H1 (cell line): ENCODE measurements at regions of chr10 and their contacts with region 1.

Region 1: GRCh38 chr10:100562008-100562711 is 26.4 kb downstream of the HIF1AN start:
- DNase-seq: peak; percentile 36 to 81
- H3K4me3 ChIP-seq: no peak overlapping the region
- H3K27ac ChIP-seq: no peak overlapping the region
- H3K4me1 ChIP-seq: peaks cover 0 to 4% (median 0%) of the 10 kb centered on the region in 4 experiments; a peak in 2 of 7 replicates
- H3K27me3 ChIP-seq: peaks cover 0 to 16% (median 9%) of the 10 kb centered on the region in 4 experiments; a peak in 5 of 7 replicates
- CTCF ChIP-seq: peak; percentile 98 to 100 (median 99)
- EP300 ChIP-seq: no peak
- POLR2A ChIP-seq: no peak; a peak in 1 of 3 replicates
- RAD21 ChIP-seq: peak; percentile 96 to 97

Region 2: DNA sequence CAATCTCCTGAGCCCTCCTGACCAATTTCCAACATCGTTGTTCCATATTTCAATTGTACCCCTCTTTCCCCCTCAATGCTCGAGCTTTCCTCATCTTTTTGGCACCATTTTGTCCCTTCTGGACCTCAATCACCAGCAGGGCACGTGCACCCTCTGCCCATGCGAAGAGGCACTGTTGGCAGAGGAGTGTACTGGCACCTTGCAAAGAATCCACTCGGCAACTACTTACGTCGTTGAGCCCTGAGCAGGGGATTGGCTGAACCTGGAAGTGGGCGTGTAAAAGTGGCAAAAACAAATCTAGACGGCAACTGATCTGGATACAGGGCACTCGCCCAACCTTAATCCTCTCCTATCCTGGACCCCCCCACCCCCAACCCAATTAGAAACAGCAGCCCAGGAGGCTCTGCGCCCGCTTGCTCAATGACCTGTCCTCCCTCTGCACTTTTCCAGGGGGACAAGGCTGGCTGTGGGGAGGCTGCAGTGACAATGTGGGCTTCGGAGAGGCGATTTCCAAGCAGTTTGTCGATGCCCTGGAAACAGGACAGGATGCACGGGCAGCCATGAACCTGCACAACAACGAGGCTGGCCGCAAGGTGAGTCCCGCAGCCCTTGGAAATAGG is 80.6 kb before region 1 on chr10:
- CTCF ChIA-PET with region 1: no interaction called
- POLR2A ChIA-PET with region 1: no interaction called
- DNase-seq: peak; percentile 77 to 97
- H3K4me3 ChIP-seq: peak overlapping the region; percentile 35 to 59 (median 53)
- H3K27ac ChIP-seq: no peak overlapping the region
- H3K4me1 ChIP-seq: peaks cover 11 to 26% (median 19%) of the 10 kb centered on the region in 4 experiments
- H3K27me3 ChIP-seq: peaks cover 59 to 77% (median 70%) of the 10 kb centered on the region in 4 experiments
- CTCF ChIP-seq: peak in 2 of 3 experiments; percentile 4 to 7; a peak in 1 of 4 replicates
- EP300 ChIP-seq: no peak
- POLR2A ChIP-seq: no peak
- RAD21 ChIP-seq: 0 out of 4 replicates have a peak, but pooled peaks of 1 of the 2 experiments have one; percentile 4

Region 3: DNA sequence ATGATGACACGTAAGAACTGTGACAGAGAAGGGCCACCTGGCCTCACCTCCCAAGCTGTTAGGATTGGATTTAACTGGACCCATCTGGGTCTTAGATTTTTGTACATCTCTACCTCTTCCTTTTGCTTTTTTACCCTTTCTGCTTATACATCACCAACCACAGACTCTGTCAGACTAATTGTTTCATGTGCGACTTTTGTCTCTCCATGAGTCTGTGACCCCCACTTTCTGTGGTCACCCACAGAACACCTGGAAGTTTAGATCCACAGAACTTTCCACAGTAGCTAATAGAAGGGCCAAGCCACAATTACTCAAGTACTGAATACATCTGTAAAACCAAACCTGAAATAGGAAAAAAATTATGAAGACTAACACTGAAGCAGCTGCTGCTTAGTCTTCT is 65.6 kb before region 1 on chr10:
- CTCF ChIA-PET with region 1: no interaction called
- POLR2A ChIA-PET with region 1: no interaction called
- DNase-seq: no peak
- H3K4me3 ChIP-seq: no peak overlapping the region
- H3K27ac ChIP-seq: no peak overlapping the region
- H3K4me1 ChIP-seq: no peaks in the 10 kb centered on the region
- H3K27me3 ChIP-seq: peaks cover 7 to 50% (median 21%) of the 10 kb centered on the region in 4 experiments
- CTCF ChIP-seq: no peak
- EP300 ChIP-seq: no peak
- POLR2A ChIP-seq: no peak
- RAD21 ChIP-seq: no peak

Region 4: DNA sequence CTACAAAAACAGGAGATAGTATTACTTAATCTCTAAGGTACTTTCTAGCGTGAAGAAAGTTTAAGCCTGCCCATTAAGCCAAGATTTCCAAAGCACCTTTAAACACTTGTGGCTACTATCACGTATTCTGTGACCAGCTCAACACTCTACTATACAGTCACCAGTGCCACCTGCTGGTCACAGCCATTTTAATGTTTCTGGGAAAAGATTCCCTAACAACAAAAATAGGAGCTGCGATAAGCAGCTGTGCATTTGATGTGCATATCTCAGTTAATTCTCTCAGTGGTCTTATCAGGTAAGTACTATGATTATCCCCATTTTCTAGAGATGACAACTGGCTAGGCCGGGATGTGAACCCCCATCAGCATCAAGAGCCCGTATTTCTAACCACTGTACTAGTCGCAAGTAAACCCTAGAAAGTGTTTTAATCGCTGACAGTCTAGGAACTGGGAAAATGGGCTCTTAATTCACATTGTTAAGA is 43.4 kb before region 1 on chr10:
- CTCF ChIA-PET with region 1: interaction called, 10 read pairs
- POLR2A ChIA-PET with region 1: interaction called, 4 read pairs
- DNase-seq: peak in 1 of 2 experiments; percentile 79
- H3K4me3 ChIP-seq: peak overlapping the region in 3 of 4 experiments; percentile 45 to 61 (median 56); a peak in 6 of 8 replicates
- H3K27ac ChIP-seq: no peak overlapping the region
- H3K4me1 ChIP-seq: peaks cover 0 to 3% (median under 1%) of the 10 kb centered on the region in 4 experiments; a peak in 2 of 7 replicates
- H3K27me3 ChIP-seq: peaks cover 2 to 24% (median 15%) of the 10 kb centered on the region in 4 experiments; a peak in 6 of 7 replicates
- CTCF ChIP-seq: peak in 2 of 3 experiments; percentile 66 to 69; a peak in 3 of 4 replicates
- EP300 ChIP-seq: no peak
- POLR2A ChIP-seq: no peak
- RAD21 ChIP-seq: peak; percentile 66 to 74

Region 5: DNA sequence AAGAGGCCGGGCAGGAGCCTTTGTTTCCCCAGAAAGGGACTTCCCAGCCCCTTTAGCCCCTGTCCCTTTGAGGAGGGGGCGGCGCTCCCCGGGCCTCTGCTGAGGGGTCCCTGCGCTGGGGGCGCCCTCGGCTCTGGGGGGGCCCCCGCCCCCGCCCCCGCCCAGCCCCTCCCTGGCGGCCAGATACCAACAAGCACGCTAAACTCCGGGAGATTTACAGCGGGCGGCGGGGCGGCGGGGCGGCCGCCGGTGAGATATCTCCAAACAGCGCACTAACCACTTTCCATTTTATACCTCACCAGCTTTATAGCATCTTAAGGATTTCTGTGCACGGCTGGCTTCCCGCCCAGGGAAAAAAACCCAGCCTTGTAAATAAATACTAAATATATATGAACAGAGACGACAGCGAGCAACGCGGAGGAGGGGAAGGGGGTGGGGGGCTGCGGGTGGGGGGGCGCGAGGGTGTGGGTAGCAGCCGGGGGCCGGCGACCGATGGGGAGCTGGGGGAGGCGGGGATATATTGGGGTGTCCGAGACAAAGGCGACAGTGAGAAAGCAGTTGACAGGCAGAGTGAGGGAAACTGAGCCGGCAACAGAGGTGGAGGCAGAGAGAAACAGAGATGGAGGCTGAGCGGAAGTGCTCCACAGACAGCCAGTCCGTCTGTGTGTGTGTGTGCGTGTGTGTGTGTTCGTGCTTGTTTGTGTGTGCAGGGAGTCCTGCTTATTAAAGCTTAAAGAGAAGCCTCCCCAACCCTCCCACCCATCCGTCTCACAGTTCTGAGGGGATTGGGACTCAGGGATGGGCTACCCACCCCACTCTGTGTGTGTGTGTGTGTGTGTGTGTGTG is 59.4 kb after region 1 on chr10:
- CTCF ChIA-PET with region 1: interaction called, 88 read pairs
- POLR2A ChIA-PET with region 1: no interaction called
- DNase-seq: no peak
- H3K4me3 ChIP-seq: no peak overlapping the region
- H3K27ac ChIP-seq: no peak overlapping the region
- H3K4me1 ChIP-seq: peaks cover 5 to 14% (median 8%) of the 10 kb centered on the region in 4 experiments
- H3K27me3 ChIP-seq: no peaks in the 10 kb centered on the region
- CTCF ChIP-seq: no peak
- EP300 ChIP-seq: no peak
- POLR2A ChIP-seq: no peak
- RAD21 ChIP-seq: no peak

Region 6: GRCh38 chr10:100677290-100677945 is 115.3 kb after region 1 on chr10:
- CTCF ChIA-PET with region 1: interaction called, 27 read pairs
- POLR2A ChIA-PET with region 1: no interaction called
- DNase-seq: no peak
- H3K4me3 ChIP-seq: no peak overlapping the region
- H3K27ac ChIP-seq: no peak overlapping the region
- H3K4me1 ChIP-seq: peaks cover 0 to 6% (median under 1%) of the 10 kb centered on the region in 4 experiments; a peak in 3 of 7 replicates
- H3K27me3 ChIP-seq: peaks cover 11 to 36% (median 25%) of the 10 kb centered on the region in 4 experiments
- CTCF ChIP-seq: no peak
- EP300 ChIP-seq: no peak
- POLR2A ChIP-seq: no peak
- RAD21 ChIP-seq: no peak

Region 7: GRCh38 chr10:100743626-100744135 is 181.5 kb after region 1 on chr10:
- CTCF ChIA-PET with region 1: interaction called, 110 read pairs
- POLR2A ChIA-PET with region 1: interaction called, 23 read pairs
- DNase-seq: no peak
- H3K4me3 ChIP-seq: peak overlapping the region in 1 of 4 experiments; percentile 57; a peak in 3 of 8 replicates
- H3K27ac ChIP-seq: no peak overlapping the region
- H3K4me1 ChIP-seq: peaks cover 0 to 33% (median 26%) of the 10 kb centered on the region in 4 experiments; a peak in 6 of 7 replicates
- H3K27me3 ChIP-seq: peaks cover 79 to 94% (median 92%) of the 10 kb centered on the region in 4 experiments
- CTCF ChIP-seq: peak; percentile 70 to 84 (median 83)
- EP300 ChIP-seq: no peak
- POLR2A ChIP-seq: no peak
- RAD21 ChIP-seq: peak; percentile 80

Region 8: GRCh38 chr10:100864978-100865377 is 302.8 kb after region 1 on chr10:
- CTCF ChIA-PET with region 1: interaction called, 39 read pairs
- POLR2A ChIA-PET with region 1: no interaction called
- DNase-seq: no peak
- H3K4me3 ChIP-seq: no peak overlapping the region
- H3K27ac ChIP-seq: no peak overlapping the region
- H3K4me1 ChIP-seq: peaks cover 0 to 8% (median 4%) of the 10 kb centered on the region in 4 experiments; a peak in 5 of 7 replicates
- H3K27me3 ChIP-seq: peaks cover 1 to 44% (median 33%) of the 10 kb centered on the region in 4 experiments
- CTCF ChIP-seq: no peak
- EP300 ChIP-seq: no peak
- POLR2A ChIP-seq: no peak
- RAD21 ChIP-seq: no peak